Posterior cingulate gyrus (tissue), 11 donors: ENCODE measurements at regions of chr17 and their contacts with region 1.

Region 1: GRCh38 chr17:17972126-17972951 is at the starts of genes DRC3 and TOM1L2:
- DNase-seq: peak; percentile 100

Region 2: GRCh38 chr17:17890773-17891759 is 81.3 kb before region 1 on chr17:
- intact Hi-C with region 1: no loop called
- DNase-seq: peak in 3 of 10 donors; percentile 51 to 90 (median 69)

Region 3: DNA sequence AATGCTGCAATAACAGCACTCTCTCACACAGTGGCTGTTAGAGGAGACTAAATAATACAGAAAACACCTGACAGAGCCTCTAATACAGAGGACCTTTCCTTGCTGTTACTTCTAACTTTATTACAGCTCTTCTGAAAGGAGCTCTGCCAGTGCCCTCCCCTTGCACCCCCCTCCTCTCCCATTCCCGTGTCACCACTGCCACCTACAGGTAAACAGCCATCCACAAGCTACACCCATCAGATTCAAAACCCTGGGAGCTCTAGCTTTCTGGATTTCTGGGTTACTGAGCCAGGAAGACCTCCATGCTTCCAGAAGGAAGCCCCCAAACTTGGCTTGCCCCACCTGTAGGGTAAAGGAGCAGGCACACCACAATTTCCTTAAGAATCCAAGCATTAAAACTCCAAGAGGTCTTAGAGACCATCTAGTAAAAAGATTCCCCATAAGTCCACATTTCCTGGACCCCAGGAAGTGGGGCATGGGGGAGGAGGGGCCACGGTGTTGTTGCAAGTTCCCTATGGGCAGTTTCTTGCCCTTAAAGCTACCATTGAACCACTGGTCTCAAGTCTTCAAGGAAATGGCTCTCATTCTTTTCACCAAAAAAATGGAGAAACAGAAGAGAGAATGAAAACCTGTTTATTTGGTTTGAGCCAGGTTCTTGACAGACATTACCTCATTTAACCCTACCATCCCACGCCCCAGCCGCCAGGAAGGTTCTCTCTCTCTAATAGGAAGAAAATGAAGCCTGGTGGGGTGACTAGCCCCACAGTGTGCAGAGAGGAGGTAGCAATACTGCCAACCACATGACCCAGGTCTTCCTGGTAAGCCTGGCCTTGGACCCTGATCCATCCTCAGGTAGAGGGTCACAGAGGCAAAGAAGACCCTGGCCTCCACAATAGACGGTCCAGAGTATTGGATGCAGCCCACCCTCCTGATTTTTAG is 52.9 kb before region 1 on chr17:
- intact Hi-C with region 1: loop called (anchors 5 kb)
- DNase-seq: peak; percentile 58 to 97 (median 78)

Region 4: DNA sequence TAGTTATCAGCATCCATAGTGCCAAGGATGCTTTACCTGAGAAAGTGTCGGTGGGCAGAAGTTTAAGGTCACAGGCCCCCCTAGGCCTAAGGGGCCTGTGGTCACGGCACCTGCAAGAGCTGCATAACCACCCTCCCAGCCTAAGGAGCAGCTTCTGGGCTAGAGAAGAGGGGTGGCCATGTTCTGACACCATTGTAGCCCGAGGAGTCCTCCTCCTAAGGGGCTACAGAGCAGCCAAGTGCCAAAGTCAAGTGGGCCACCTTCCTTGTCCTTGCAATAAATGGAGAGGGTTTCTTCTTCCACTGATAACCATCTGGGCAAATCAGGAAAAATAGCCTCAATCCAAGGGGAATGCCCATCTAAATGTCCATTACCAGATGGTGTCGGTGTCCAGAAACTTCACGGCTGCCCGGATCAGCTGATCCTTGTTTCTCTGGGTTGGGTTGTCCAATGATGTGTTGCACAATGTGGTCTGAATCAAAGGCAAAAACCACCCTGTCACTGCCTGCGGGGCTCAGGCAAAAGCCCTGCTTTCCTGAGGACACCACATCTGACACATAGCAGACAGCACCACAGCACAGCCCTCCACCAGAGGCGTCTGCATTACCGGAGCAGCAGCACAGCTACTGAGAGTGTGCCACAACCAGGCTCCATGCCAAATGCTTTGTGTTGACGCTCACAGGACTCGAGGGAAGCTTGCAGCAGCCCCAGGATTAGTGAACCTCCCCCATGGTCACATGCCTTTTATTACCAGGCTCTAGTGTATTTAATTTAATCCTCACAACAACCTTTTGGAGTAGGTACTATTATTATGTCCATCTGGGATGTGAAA is 53.8 kb after region 1 on chr17:
- intact Hi-C with region 1: no loop called
- DNase-seq: peak in 9 of 10 donors; percentile 39 to 93 (median 59)